Thyroid gland (tissue), 4 donors: ENCODE measurements at regions of chr12 and their contacts with region 1.

Region 1: DNA sequence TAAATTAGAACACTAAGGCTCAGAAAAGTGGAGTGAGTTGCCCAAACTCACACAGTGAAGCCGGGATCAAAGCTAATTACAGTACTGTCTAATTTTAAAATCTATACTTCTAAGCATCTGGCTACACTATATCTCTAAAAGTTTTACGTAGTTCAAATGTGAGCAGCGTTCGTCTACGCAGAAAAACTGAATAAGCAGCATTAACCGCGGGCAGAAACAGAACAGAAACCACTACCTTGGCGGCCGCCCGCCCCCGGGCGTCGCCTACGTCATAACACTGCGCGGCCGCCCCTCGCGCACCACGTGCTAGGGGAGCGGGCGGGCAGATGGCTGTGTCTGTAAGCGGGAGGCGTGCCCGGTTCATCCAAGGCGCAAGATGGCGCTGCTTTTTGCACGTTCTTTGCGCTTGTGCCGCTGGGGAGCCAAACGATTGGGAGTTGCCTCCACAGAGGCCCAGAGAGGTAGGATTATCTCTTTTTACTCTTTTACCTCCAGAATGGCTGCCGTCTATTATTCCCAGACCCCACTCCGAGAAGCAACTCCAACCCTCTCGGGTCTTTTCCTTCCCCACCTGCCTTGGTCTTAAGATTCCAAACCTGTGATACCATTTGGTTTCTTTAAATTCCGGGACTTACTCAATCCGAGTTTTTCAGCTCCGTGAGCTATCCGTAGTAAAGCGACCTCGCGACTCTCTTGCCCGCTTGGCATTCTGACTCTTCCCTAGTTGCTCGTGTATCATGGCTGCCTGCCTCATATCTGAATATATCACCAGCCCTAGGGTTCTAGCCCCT is at the start of gene SPRYD4:
- DNase-seq: peak; percentile 92 to 93
- H3K4me3 ChIP-seq: peak within 1 kb of the TSS; percentile 67 to 96 (median 76)
- H3K27ac ChIP-seq: peak within 1 kb of the TSS; percentile 82 to 96 (median 90)
- H3K4me1 ChIP-seq: peaks cover 8 to 19% of the 10 kb centered on the region in 2 donors
- H3K27me3 ChIP-seq: no peaks in the 10 kb centered on the region
- CTCF ChIP-seq: peak in 3 of 6 experiments; percentile 12 to 36 (median 23)
- POLR2A ChIP-seq: peak; percentile 28 to 90
- total RNA-seq, gene SPRYD4: 2.8 to 4.6 (median 4.3) TPM

Region 2: GRCh38 chr12:56127888-56128669 is 340.3 kb before region 1 on chr12 and contains the start of gene ESYT1:
- intact Hi-C with region 1: loop called (anchors 10 kb)
- DNase-seq: peak; percentile 100
- H3K4me3 ChIP-seq: peak within 1 kb of the TSS; percentile 45 to 73 (median 60)
- H3K27ac ChIP-seq: peak within 1 kb of the TSS; percentile 71 to 85 (median 84)
- H3K4me1 ChIP-seq: peaks cover 39 to 46% of the 10 kb centered on the region in 2 donors
- H3K27me3 ChIP-seq: no peaks in the 10 kb centered on the region
- CTCF ChIP-seq: no peak
- POLR2A ChIP-seq: peak; percentile 88 to 98
- total RNA-seq, gene ESYT1: 60.6 to 84.7 (median 68.7) TPM

Region 3: DNA sequence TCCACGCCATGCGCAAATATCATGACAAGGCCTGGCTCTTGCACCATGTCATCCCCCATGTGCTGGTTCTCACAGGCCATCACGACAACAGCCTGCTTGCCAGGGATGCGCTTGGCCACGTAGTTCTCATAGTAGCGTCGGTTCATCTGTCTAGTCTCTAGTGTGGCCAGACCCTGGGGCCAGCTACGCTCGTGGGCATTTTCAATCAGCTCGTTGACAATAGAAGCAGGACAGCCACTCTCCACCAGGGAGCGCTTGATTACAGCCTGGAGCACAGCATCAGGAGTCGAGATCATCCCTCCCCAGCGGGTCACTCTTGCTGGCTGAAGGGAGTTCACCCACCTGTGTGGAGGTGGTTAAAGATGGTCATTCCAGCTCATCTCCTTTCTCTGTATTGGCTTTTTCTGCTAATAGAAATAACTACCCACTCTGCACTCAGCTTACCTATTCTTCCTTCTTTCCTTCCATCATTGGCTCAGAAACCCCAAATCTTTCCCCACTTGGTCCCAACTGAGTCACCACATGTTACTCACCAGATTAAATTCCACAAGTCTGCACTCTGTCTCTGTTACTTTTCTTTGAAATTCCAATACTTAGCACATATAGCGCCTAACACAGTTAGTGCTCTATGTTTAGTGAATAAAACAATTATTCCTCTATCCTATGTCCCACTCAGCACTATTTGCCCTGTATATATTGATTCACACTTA is 261.8 kb before region 1 on chr12:
- intact Hi-C with region 1: loop called (anchors 10 kb)
- DNase-seq: peak; percentile 36 to 40
- H3K4me3 ChIP-seq: no peak overlapping the region
- H3K27ac ChIP-seq: no peak overlapping the region
- H3K4me1 ChIP-seq: peaks cover 0 to 5% of the 10 kb centered on the region in 2 donors
- H3K27me3 ChIP-seq: no peaks in the 10 kb centered on the region
- CTCF ChIP-seq: peak in 4 of 6 experiments; percentile 24 to 43 (median 32)
- POLR2A ChIP-seq: no peak

Region 4: DNA sequence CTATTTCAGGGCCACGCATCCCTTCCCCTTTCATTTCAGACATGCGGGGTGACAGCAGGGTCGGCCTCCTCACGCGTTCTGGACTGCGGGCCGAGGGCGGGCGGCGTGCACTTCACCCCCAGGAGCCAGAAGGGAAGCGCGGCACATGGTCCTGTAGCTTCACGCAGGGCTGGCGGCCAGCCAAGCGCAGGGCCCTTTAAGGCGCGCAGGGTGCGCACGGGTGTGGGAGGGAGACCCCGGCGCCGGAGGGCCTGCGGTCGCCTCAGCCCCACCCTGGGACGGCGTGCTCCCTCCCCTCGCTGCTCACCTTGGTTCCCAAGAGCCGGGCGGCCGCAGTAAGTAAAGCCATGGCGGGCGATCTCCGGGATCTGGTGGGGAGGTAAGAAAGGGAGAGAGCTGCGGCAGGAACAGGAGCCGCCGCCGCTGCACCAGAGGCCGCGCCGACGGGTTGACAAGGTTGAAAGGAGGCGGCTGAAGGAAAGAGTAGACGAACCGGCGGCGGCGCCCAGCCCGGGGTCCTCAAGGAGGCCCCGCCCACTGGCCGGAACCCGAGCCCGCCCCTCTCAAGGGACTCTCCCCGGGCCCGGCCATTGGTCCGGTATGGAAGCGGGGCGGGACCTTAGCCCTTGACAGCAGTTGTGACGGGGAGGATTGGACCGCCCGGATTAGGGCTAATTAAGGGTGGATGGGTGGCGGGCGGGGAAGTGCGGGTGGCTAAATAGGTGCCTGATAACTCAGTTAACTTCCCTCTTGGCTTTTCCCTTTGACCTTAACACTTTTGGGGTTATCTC is 168.4 kb before region 1 on chr12 and contains the start of gene CS:
- intact Hi-C with region 1: loop called (anchors 10 kb)
- DNase-seq: peak; percentile 99 to 100
- H3K4me3 ChIP-seq: peak within 1 kb of the TSS; percentile 4 to 86 (median 77)
- H3K27ac ChIP-seq: peak within 1 kb of the TSS; percentile 90 to 97 (median 91)
- H3K4me1 ChIP-seq: peaks cover 41 to 50% of the 10 kb centered on the region in 2 donors
- H3K27me3 ChIP-seq: no peaks in the 10 kb centered on the region
- CTCF ChIP-seq: peak in 1 of 6 experiments; percentile 24
- POLR2A ChIP-seq: peak; percentile 60 to 81
- total RNA-seq, gene CS: 110 to 190 (median 118) TPM

Region 5: GRCh38 chr12:56333679-56334489 is 134.5 kb before region 1 on chr12 and contains the start of gene PAN2:
- intact Hi-C with region 1: loop called (anchors 10 kb)
- DNase-seq: peak; percentile 97 to 98
- H3K4me3 ChIP-seq: peak within 1 kb of the TSS; percentile 41 to 76 (median 52)
- H3K27ac ChIP-seq: peak within 1 kb of the TSS; percentile 93 to 97 (median 96)
- H3K4me1 ChIP-seq: peaks cover 8 to 19% of the 10 kb centered on the region in 2 donors
- H3K27me3 ChIP-seq: no peaks in the 10 kb centered on the region
- CTCF ChIP-seq: peak; percentile 12 to 56 (median 40)
- POLR2A ChIP-seq: peak in 1 of 2 donors; percentile 90
- total RNA-seq, gene PAN2: 95.7 to 148 (median 134) TPM

Region 6: DNA sequence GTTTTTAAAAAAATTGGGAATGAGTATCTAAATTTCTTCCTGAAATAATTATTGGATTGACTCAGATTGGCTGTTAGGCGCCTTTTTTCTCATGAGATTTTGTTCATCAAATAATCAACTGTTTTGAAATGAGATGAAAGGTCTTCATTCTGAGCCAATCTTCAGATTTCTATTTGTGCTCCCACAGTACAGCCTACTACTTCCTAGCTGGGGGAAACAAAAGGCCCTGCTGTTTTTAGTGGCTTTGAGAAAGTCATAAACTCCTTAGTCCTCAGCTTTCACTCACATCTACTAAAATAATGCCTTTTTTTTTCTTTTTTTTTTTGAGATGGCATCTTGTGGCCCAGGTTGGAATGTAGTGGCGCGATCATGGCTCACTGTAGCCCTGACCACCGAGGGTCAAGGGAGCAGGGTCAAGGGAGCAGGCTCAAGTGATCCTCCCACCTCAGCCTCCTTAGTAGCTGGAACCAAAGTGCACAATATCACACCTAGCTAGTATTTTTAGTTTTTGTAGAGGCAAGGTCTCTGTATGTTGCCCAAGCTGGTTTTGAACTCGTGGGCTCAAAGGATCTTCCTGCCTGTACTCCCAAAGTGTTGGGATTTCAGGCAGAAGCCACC is 241.5 kb after region 1 on chr12:
- intact Hi-C with region 1: no loop called
- DNase-seq: no peak
- H3K4me3 ChIP-seq: no peak overlapping the region
- H3K27ac ChIP-seq: no peak overlapping the region
- H3K4me1 ChIP-seq: no peaks in the 10 kb centered on the region
- H3K27me3 ChIP-seq: no peaks in the 10 kb centered on the region
- CTCF ChIP-seq: no peak
- POLR2A ChIP-seq: no peak